ENCODE measurements at regions of chr11 and their contacts with region 1.

Region 1: GRCh38 chr11:57249384-57250319 is 12.6 kb upstream of the APLNR start:
- DNase-seq: peak; percentile 68
- H3K4me3 Mint-ChIP-seq: no peak overlapping the region
- H3K27ac Mint-ChIP-seq: no peak overlapping the region
- H3K4me1 Mint-ChIP-seq: peaks cover 6% of the 10 kb centered on the region
- H3K27me3 Mint-ChIP-seq: peaks cover 11% of the 10 kb centered on the region

Region 2: DNA sequence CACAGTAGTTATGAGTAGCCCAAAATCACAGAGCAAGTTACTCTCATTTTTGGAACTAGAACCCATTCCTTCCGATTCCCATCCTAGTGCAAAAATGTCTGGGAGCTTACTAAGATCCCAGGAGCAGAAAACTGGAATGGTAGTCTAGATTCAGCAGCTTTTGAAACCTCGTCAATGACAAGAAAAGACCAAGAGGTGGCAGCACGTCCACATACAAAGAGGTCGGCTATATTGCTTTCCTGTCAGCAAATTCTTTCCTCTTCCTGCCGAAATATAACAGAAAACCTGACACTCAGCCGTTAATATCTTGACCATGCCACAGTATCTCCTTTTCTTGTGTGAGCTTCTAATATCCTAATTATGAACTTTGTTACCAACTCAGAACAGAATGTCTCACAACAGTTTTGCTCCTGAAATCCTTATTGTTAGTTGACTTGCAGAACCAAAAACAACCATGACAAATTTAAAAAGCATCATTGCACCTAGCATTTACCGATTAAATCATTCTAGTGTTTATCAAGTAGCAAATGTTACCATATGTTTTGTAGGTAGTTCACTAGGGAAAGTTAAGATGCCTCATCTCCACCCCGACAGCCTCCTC is 408.3 kb before region 1 on chr11:
- CTCF ChIA-PET with region 1: interaction called, 94 read pairs
- DNase-seq: peak; percentile 45
- H3K4me3 Mint-ChIP-seq: no peak overlapping the region
- H3K27ac Mint-ChIP-seq: no peak overlapping the region
- H3K4me1 Mint-ChIP-seq: no peaks in the 10 kb centered on the region
- H3K27me3 Mint-ChIP-seq: no peaks in the 10 kb centered on the region

Region 3: DNA sequence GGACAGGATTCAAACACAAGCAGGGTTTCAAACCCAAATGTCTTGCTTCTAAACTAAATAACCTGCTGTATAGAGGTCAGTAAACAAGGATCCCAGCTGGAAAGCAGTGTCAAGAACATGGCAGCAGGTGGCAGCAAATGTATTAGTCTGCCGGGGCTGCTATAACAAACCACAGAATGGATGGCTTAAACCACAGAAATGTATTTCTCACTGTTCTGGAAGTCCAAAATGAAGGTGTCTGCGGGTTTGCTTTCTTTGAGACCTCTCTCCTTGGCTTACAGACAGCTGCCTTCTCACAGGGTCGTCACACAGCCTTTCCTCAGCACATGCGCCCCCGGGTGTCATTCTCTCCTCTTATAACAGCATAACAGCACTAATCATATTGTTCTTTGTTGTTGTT is 133.0 kb before region 1 on chr11:
- CTCF ChIA-PET with region 1: interaction called, 40 read pairs
- DNase-seq: peak; percentile 42
- H3K4me3 Mint-ChIP-seq: no peak overlapping the region
- H3K27ac Mint-ChIP-seq: no peak overlapping the region
- H3K4me1 Mint-ChIP-seq: no peaks in the 10 kb centered on the region
- H3K27me3 Mint-ChIP-seq: no peaks in the 10 kb centered on the region

Region 4: GRCh38 chr11:57260937-57261783 is 11.5 kb after region 1 on chr11:
- CTCF ChIA-PET with region 1: interaction called, 14 read pairs
- DNase-seq: no peak
- H3K4me3 Mint-ChIP-seq: no peak overlapping the region
- H3K27ac Mint-ChIP-seq: no peak overlapping the region
- H3K4me1 Mint-ChIP-seq: no peaks in the 10 kb centered on the region
- H3K27me3 Mint-ChIP-seq: peaks cover 12% of the 10 kb centered on the region

Region 5: DNA sequence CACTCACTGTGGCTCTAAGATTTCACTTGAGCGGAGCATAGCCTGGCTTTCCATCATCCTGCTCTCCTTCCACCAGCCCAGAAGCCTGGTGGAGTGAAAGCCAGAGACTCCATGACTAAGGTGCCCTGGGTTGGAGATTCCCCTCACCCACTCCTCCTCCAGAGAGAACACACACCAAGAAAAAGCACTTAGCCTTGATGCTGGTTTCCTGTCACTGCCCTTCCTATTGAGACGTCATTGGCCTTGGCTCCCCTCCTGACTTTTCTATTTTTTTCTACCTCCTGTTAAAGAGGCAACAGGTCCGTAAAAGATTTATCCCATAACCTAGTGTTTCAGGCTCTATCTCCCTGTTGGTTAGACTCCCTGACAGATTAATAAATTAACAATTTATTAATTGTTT is 25.9 kb after region 1 on chr11:
- CTCF ChIA-PET with region 1: interaction called, 10 read pairs
- DNase-seq: no peak
- H3K4me3 Mint-ChIP-seq: no peak overlapping the region
- H3K27ac Mint-ChIP-seq: no peak overlapping the region
- H3K4me1 Mint-ChIP-seq: no peaks in the 10 kb centered on the region
- H3K27me3 Mint-ChIP-seq: peaks cover 21% of the 10 kb centered on the region

Region 6: GRCh38 chr11:57349491-57350274 is 100.0 kb after region 1 on chr11:
- CTCF ChIA-PET with region 1: no interaction called
- DNase-seq: peak; percentile 71
- H3K4me3 Mint-ChIP-seq: no peak overlapping the region
- H3K27ac Mint-ChIP-seq: no peak overlapping the region
- H3K4me1 Mint-ChIP-seq: no peaks in the 10 kb centered on the region
- H3K27me3 Mint-ChIP-seq: peaks cover 57% of the 10 kb centered on the region